Caco-2 (cell line): ENCODE measurements at regions of chr11 and their contacts with region 1.

Region 1: DNA sequence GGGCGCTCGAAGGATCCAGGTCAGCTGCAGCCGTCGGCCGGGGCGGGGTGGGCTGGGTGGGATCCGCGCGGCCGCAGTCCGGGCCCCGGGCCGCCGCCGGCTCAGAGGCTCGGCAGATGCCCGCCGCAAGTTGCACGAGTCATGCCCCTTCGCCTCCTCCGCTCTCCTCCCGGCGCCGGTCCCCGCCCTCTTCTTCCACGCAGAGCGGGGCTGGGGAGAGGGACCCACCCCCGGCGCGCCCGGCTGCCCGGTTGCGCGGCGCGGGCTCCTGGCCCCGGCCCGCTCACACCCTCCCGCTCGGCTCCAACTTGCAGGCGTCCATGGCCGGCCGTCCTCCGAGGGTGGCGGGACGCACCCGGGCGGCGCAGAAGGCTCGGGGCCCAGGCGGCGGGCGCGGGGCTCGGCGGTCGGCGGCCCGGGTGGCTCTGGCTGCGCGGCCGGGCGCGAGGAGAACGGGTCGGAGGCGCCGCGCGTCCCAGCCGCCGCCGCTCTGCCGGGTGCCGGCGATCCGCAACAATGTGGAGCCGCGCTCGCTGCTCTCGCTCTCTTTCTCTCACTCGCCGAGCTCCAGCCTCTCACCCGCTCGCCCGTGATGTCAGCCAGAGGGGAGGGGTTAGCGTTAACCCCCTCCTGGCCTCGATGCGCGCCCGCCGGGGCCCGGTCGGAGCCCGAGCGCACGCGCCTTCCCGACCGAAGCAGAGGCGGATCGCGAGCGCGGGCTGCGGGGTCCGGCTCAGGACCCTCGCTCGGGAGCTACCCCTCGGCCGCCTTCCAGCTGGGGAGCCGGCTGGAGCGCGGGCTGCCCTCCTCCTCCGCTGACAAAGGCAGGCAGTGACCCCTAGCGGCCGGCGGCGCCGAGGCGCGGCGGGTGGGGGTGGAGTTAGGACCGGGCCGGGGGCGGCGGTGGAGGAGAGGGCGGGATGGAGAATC is at the start of gene NECTIN1:
- DNase-seq: peak; percentile 93 to 98
- H3K4me3 ChIP-seq: peak within 1 kb of the TSS; percentile 87
- H3K4me3 Mint-ChIP-seq: peak within 1 kb of the TSS; percentile 89
- H3K27ac Mint-ChIP-seq: peak within 1 kb of the TSS; percentile 15
- H3K4me1 ChIP-seq: peaks cover 25% of the 10 kb centered on the region
- H3K4me1 Mint-ChIP-seq: peaks cover 22% of the 10 kb centered on the region
- H3K27me3 ChIP-seq: no peaks in the 10 kb centered on the region
- H3K27me3 Mint-ChIP-seq: peaks cover 5% of the 10 kb centered on the region
- CTCF ChIP-seq: peak; percentile 99
- total RNA-seq, gene NECTIN1: 60.1 and 63.6 TPM in 2 replicates

Region 2: GRCh38 chr11:119481021-119481666 is 247.8 kb before region 1 on chr11:
- CTCF ChIA-PET with region 1: no interaction called
- POLR2A ChIA-PET with region 1: no interaction called
- intact Hi-C with region 1: loop called (anchors 1 kb)
- DNase-seq: peak; percentile 93 to 99
- H3K4me3 ChIP-seq: no peak overlapping the region
- H3K4me3 Mint-ChIP-seq: no peak overlapping the region
- H3K27ac Mint-ChIP-seq: peak overlapping the region; percentile 16
- H3K4me1 ChIP-seq: peaks cover 5% of the 10 kb centered on the region; the same call in 1 of the 2 replicates
- H3K4me1 Mint-ChIP-seq: peaks cover 8% of the 10 kb centered on the region
- H3K27me3 ChIP-seq: no peaks in the 10 kb centered on the region; the same call in 1 of the 2 replicates
- H3K27me3 Mint-ChIP-seq: peaks cover 13% of the 10 kb centered on the region
- CTCF ChIP-seq: peak; percentile 99 to 100

Region 3: GRCh38 chr11:119684361-119685110 is 44.4 kb before region 1 on chr11:
- CTCF ChIA-PET with region 1: interaction called, 23 read pairs
- POLR2A ChIA-PET with region 1: interaction called, 3 read pairs
- intact Hi-C with region 1: loop called (anchors 5 kb)
- DNase-seq: no peak
- H3K4me3 ChIP-seq: no peak overlapping the region
- H3K4me3 Mint-ChIP-seq: no peak overlapping the region
- H3K27ac Mint-ChIP-seq: no peak overlapping the region
- H3K4me1 ChIP-seq: peaks cover 8% of the 10 kb centered on the region; the same call in 1 of the 2 replicates
- H3K4me1 Mint-ChIP-seq: no peaks in the 10 kb centered on the region
- H3K27me3 ChIP-seq: no peaks in the 10 kb centered on the region
- H3K27me3 Mint-ChIP-seq: no peaks in the 10 kb centered on the region
- CTCF ChIP-seq: no peak

Region 4: DNA sequence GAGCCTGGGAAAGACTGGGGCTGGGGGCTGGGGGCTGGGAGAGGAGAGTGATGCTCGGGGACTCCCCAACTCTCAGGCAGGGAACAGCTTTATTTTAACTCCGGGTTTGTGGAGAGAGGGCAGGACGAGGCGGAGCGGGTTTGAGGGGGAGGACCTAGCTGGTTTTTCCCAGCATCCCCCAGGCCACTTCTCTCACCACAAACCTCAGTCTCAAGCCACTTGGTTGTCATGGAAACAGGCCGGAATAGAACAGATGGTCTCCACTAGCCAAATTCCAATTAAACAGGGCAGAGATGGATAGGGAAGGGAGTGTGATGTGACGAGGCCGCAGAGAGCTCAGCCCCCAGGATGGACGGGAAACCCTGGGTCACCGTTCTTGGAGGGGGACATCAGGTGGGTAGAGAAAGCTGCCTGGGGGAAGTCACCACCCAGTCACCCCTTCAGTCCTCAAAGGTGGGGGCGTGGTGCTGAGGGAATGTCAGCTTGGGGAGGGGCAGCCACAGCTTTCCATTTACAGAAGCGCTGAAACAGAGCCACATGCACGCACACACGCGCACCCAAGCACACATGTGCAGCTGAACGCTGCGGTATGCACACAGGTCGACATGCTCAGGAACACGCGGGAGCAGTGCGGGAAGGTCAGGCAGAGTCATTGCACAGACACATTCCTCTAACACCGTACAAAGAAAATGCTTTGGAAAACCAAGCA is 19.1 kb before region 1 on chr11:
- CTCF ChIA-PET with region 1: interaction called, 48 read pairs
- POLR2A ChIA-PET with region 1: interaction called, 6 read pairs
- intact Hi-C with region 1: loop called (anchors 1 kb)
- DNase-seq: no peak
- H3K4me3 ChIP-seq: no peak overlapping the region
- H3K4me3 Mint-ChIP-seq: no peak overlapping the region
- H3K27ac Mint-ChIP-seq: peak overlapping the region; percentile 28
- H3K4me1 ChIP-seq: peaks cover 68% of the 10 kb centered on the region
- H3K4me1 Mint-ChIP-seq: peaks cover 81% of the 10 kb centered on the region
- H3K27me3 ChIP-seq: no peaks in the 10 kb centered on the region
- H3K27me3 Mint-ChIP-seq: no peaks in the 10 kb centered on the region
- CTCF ChIP-seq: no peak

Region 5: DNA sequence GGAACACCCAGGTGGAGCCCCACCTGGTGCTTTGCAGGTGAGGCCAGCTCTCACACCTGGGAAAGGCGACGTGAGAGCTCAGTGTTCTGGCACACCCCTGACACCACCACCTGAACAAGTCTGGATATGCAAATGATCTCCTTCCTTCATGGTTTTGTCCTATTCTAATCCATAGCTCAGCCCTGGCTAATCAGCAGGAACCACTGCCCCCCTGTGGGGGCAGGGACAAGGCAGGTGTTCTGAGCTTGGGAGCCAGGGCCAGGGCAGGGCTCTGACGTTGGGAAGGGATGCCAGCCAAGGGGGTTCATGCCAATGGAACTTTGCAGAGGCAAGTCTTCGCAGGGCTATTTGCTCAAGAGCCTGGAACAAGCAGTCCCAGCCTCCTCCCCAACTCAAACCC is 264.8 kb after region 1 on chr11:
- CTCF ChIA-PET with region 1: interaction called, 18 read pairs
- POLR2A ChIA-PET with region 1: no interaction called
- intact Hi-C with region 1: loop called (anchors 10 kb)
- DNase-seq: peak in 1 of 2 experiments; percentile 69
- H3K4me3 ChIP-seq: no peak overlapping the region
- H3K4me3 Mint-ChIP-seq: no peak overlapping the region
- H3K27ac Mint-ChIP-seq: no peak overlapping the region
- H3K4me1 ChIP-seq: 0 out of 2 replicates have a peak, but pooled peaks cover 8% of the 10 kb centered on the region
- H3K4me1 Mint-ChIP-seq: no peaks in the 10 kb centered on the region
- H3K27me3 ChIP-seq: no peaks in the 10 kb centered on the region
- H3K27me3 Mint-ChIP-seq: no peaks in the 10 kb centered on the region
- CTCF ChIP-seq: peak; percentile 33 to 82

Region 6: DNA sequence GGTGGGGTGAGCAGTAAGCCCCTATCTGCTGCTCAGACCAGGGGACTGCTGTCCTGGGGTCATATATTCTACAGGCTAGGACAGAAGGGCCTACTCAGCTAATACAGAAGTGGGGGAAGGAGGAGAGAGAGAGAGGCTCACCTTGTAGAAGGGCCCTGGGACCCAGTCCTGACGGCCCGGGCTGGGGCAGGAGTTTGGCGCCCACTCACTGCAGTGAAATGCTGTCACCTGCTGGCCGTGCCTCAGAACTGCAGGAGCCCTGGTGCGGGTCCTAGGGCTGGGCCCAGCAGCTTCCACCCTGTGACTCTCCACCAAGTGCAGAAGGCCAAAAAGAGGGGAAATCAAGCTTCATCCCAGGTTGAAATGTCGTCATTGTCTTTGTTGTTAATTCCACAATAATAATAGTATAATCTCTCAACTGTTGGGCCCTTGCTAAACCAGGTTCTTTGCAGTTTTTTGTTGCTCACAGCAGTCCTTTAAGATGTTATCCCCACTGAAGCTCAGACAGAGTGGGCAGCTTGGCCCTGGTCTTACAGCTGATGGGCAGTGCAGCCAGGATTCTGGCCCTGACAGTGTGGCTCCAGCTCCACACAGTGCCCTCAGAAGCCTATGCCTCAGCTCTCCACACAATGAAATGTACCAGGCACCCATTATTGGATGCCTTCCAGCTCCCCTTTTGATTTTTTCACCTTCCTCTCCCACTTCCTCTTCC is 379.4 kb after region 1 on chr11:
- CTCF ChIA-PET with region 1: interaction called, 25 read pairs
- POLR2A ChIA-PET with region 1: no interaction called
- intact Hi-C with region 1: loop called (anchors 1 kb)
- DNase-seq: peak; percentile 78 to 91
- H3K4me3 ChIP-seq: no peak overlapping the region
- H3K4me3 Mint-ChIP-seq: no peak overlapping the region
- H3K27ac Mint-ChIP-seq: no peak overlapping the region
- H3K4me1 ChIP-seq: peaks cover 4% of the 10 kb centered on the region; the same call in 1 of the 2 replicates
- H3K4me1 Mint-ChIP-seq: no peaks in the 10 kb centered on the region
- H3K27me3 ChIP-seq: no peaks in the 10 kb centered on the region
- H3K27me3 Mint-ChIP-seq: peaks cover 17% of the 10 kb centered on the region
- CTCF ChIP-seq: peak; percentile 100